Posterior cingulate gyrus (tissue), 11 donors: ENCODE measurements at regions of chr15 and their contacts with region 1.

Region 1: DNA sequence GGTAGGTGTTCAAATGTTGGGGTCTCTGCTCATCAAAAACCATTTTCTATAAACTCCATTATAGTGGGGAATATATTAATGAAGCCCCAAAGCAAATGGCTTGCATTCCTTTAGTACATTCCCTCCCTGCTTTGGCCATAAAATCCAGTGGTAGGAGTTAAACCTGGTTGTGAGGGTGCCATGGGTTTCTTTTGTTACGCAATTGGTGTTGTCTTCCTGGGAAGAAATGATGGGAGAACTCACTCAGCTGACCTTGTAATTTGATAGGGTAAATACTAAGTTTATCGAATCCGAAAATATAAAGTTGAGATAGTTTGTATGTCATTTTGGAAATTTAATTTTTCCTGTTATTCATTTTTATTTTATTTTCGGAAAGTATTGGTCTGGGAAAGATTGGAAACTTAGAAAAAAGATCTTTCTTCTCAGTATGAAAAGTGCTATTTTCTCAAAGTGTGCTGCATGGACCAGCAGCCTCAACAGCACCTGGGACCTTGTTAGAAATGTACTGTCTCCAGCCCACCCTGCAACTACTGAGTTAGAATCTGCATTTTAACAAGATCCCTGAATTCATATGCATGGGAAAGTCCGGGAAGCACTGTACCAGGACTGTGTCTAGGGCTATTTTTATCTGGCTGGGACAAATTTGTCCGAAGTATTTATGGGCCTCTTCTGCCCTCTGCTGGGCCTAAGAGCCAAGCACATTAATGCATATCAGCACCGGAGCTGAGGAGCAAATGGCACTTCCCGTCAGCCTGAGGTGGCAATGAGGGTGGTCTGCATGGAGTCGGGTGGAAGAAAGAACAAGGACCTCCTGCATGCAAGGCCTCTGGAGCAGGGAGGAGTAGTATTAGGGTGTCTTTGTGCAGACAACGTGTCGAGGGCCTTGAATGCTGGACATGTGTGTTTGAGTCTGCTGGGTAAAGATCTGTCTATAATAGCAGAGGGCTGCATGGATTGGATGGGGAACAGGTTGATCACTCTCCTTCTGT is 54.7 kb downstream of the FAM81A start:
- DNase-seq: peak in 9 of 10 donors; percentile 36 to 93 (median 73)

Region 2: GRCh38 chr15:58980351-58980939 is 512.2 kb before region 1 on chr15:
- intact Hi-C with region 1: loop called (anchors 1 kb)
- DNase-seq: no peak

Region 3: DNA sequence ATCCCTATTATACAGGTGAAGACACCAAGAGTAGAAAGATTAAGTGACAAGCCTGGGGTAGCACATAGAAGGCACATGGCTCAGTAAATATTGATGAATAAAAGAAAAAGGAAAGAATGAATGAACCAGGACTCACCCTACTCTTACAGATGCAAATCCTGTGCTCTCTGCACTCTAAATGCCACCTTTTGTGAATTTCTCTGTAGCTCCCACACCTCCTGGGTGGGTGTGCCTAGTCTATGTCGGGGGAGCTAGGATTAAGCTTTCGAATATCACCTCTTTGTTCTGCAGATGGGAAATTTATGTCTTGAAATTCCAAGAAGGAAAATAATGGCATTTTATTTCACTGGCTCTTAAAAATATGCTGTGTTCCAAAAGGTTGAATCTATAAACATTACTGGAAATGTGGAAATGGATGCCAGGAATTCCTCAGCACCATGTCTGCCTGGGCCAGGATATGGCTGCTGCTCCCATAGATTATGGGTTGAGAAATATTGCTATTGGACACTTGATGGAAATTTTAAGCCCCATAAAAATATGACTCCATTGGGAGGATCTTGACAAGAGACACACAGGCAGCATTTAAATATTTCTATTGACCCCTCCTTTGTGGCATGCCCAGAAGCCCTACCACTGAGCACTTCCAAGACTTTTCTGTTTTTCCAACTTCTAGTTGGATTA is 344.4 kb before region 1 on chr15:
- intact Hi-C with region 1: loop called (anchors 2 kb)
- DNase-seq: no peak

Region 4: DNA sequence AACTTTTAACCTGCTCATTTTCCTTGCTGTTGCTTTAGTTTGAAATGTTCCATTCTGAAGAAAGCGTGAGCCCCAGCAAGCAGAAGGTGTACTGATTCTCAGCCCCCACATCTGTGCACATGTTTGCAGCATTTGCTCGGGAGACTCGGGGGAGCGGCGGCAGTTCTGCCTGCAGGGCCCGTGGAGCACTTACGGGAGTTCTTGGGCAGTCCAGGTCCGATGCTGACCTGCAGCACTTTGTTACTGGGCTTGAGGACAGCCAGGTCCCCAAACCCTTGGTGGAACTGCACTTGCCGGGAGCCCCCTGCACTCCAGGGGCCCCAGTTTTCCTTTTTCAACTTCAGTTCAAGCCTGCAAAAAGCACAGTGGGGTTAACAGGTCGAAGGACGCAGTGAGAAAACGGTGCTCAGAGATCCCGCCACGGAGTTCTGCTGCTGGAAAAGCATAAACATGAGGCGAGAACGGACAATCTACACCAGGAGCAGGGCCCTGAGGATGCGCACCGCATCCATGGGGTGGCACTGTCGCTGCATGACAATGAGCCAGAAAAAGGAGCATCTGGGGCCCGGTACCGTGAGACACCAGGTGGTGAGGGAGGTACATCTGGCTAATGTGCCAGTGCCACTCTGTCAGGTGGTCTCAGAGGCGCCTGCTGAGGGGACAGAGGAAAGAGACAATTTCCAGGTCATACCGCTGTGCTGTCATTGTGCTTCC is 331.6 kb before region 1 on chr15:
- intact Hi-C with region 1: loop called (anchors 5 kb)
- DNase-seq: peak in 8 of 10 donors; percentile 43 to 94 (median 57)

Region 5: GRCh38 chr15:59247364-59247763 is 245.3 kb before region 1 on chr15:
- intact Hi-C with region 1: loop called (anchors 5 kb)
- DNase-seq: peak in 6 of 10 donors; percentile 44 to 87 (median 58)

Region 6: DNA sequence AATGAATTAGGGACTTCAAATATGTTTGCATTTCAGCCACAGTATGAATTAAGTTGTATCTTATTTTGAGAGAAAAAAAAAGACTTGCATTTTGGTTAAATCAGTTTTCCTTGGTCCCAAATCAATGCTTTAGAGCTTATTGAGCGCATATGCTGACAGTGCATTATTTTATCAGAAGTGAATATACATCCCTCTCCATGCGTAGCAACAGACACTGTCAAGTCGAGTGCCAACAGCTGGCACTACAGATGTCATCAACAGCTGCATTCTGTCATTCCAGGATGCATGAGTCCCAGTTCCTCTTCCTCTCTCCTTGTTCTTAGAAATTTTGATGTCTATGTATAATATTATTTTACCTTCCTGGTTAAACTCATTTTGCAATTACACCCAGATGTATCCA is 355.3 kb after region 1 on chr15:
- intact Hi-C with region 1: no loop called
- DNase-seq: no peak